ENCODE measurements at regions of chr4 and their contacts with region 1.

Region 1: GRCh38 chr4:93199492-93199891 is 629.1 kb upstream of the ATOH1 start:
- DNase-seq: peak in 1 of 2 experiments; percentile 25
- H3K4me3 ChIP-seq: no peak overlapping the region; a peak in 1 of 8 replicates
- H3K27ac ChIP-seq: no peak overlapping the region
- H3K4me1 ChIP-seq: peaks cover 0 to 6% (median 4%) of the 10 kb centered on the region in 4 experiments; a peak in 4 of 7 replicates
- H3K27me3 ChIP-seq: no peaks in the 10 kb centered on the region
- CTCF ChIP-seq: peak in 2 of 3 experiments; percentile 58 to 67; a peak in 3 of 4 replicates
- EP300 ChIP-seq: peak in 1 of 2 experiments; percentile 36; a peak in 1 of 3 replicates
- POLR2A ChIP-seq: no peak
- RAD21 ChIP-seq: peak; percentile 78 to 83

Region 2: GRCh38 chr4:93187246-93188245 is 11.9 kb before region 1 on chr4:
- CTCF ChIA-PET with region 1: interaction called, 4 read pairs
- POLR2A ChIA-PET with region 1: interaction called, 10 read pairs
- DNase-seq: no peak
- H3K4me3 ChIP-seq: no peak overlapping the region
- H3K27ac ChIP-seq: no peak overlapping the region
- H3K4me1 ChIP-seq: no peaks in the 10 kb centered on the region
- H3K27me3 ChIP-seq: no peaks in the 10 kb centered on the region
- CTCF ChIP-seq: no peak
- EP300 ChIP-seq: no peak
- POLR2A ChIP-seq: no peak
- RAD21 ChIP-seq: no peak

Measured in H1 (cell line).